ENCODE measurements at regions of chr6 and their contacts with region 1.

Region 1: GRCh38 chr6:137944793-137945498 is 77.9 kb downstream of the TNFAIP3 start:
- DNase-seq: no peak
- ATAC-seq: peak; percentile 73
- H3K4me3 Mint-ChIP-seq: peak overlapping the region; percentile 17
- H3K27ac Mint-ChIP-seq: peak overlapping the region; percentile 27
- H3K4me1 Mint-ChIP-seq: peaks cover 30% of the 10 kb centered on the region
- H3K27me3 Mint-ChIP-seq: no peaks in the 10 kb centered on the region
- CTCF ChIP-seq: no peak

Region 2: GRCh38 chr6:137661601-137662000 is 283.3 kb before region 1 on chr6:
- CTCF ChIA-PET with region 1: interaction called, 17 read pairs
- POLR2A ChIA-PET with region 1: no interaction called
- intact Hi-C with region 1: loop called (anchors 1 kb)
- DNase-seq: no peak
- ATAC-seq: peak; percentile 56
- H3K4me3 Mint-ChIP-seq: no peak overlapping the region
- H3K27ac Mint-ChIP-seq: no peak overlapping the region
- H3K4me1 Mint-ChIP-seq: no peaks in the 10 kb centered on the region
- H3K27me3 Mint-ChIP-seq: peaks cover 7% of the 10 kb centered on the region
- CTCF ChIP-seq: no peak

Region 3: DNA sequence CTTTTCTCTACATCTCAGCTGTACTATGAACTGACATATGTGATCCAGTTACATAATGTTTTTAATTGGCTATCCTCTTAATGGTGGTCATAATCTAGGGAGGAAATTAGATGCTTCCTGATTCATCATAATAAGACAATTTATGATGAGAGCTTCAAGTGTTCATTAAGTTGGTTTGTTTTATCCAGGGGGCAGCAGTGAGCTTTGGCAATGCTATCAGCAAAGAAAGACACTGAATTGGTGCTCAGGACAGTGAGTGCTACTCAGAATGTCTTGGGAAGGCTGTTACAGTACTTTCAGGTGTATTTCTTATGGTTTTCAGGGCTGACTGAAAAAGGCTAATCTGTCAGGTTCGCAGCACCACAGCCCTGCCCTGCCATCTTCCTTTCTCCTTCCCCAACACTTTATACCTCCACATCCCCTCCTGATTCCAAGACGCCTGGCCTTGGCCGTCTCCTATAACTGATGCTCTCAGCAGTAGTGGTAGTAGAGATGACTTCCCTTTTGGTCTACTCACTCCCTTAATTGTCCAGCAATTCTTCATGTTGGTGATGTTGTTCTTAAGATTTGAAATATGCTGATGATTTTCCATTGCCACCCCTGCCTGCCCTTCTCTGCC is 144.9 kb before region 1 on chr6:
- CTCF ChIA-PET with region 1: interaction called, 33 read pairs
- POLR2A ChIA-PET with region 1: interaction called, 3 read pairs
- intact Hi-C with region 1: loop called (anchors 1 kb)
- DNase-seq: no peak
- ATAC-seq: peak; percentile 91
- H3K4me3 Mint-ChIP-seq: no peak overlapping the region
- H3K27ac Mint-ChIP-seq: peak overlapping the region; percentile 65
- H3K4me1 Mint-ChIP-seq: peaks cover 29% of the 10 kb centered on the region
- H3K27me3 Mint-ChIP-seq: no peaks in the 10 kb centered on the region
- CTCF ChIP-seq: no peak

Region 4: GRCh38 chr6:137878486-137879285 is 66.3 kb before region 1 on chr6:
- CTCF ChIA-PET with region 1: interaction called, 132 read pairs
- POLR2A ChIA-PET with region 1: interaction called, 60 read pairs
- intact Hi-C with region 1: loop called (anchors 1 kb)
- DNase-seq: no peak
- ATAC-seq: no peak
- H3K4me3 Mint-ChIP-seq: no peak overlapping the region
- H3K27ac Mint-ChIP-seq: peak overlapping the region; percentile 30
- H3K4me1 Mint-ChIP-seq: peaks cover 50% of the 10 kb centered on the region
- H3K27me3 Mint-ChIP-seq: no peaks in the 10 kb centered on the region
- CTCF ChIP-seq: no peak

Region 5: DNA sequence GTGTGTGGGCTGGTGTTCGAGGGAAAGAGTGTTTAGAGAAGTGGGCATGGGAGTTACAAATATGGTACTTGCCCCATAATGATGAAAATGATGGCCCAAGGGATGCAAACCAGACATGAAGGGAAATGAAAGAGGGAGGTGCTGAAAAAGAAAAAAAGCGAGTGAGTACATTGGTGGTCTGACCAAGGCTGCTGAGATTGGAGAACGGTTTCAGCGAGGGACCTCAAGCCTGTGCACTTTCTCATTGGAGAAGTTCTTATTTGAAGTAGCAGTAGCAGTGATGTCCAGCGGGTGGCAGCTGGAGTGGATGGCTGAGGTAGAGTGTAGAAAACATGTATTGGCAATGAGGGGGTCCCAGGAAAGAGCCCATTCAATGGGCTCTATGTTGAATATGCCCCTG is 23.1 kb before region 1 on chr6:
- CTCF ChIA-PET with region 1: interaction called, 9 read pairs
- POLR2A ChIA-PET with region 1: interaction called, 25 read pairs
- intact Hi-C with region 1: loop called (anchors 1 kb)
- DNase-seq: no peak
- ATAC-seq: peak; percentile 31
- H3K4me3 Mint-ChIP-seq: no peak overlapping the region
- H3K27ac Mint-ChIP-seq: no peak overlapping the region
- H3K4me1 Mint-ChIP-seq: peaks cover 50% of the 10 kb centered on the region
- H3K27me3 Mint-ChIP-seq: no peaks in the 10 kb centered on the region
- CTCF ChIP-seq: no peak

Region 6: DNA sequence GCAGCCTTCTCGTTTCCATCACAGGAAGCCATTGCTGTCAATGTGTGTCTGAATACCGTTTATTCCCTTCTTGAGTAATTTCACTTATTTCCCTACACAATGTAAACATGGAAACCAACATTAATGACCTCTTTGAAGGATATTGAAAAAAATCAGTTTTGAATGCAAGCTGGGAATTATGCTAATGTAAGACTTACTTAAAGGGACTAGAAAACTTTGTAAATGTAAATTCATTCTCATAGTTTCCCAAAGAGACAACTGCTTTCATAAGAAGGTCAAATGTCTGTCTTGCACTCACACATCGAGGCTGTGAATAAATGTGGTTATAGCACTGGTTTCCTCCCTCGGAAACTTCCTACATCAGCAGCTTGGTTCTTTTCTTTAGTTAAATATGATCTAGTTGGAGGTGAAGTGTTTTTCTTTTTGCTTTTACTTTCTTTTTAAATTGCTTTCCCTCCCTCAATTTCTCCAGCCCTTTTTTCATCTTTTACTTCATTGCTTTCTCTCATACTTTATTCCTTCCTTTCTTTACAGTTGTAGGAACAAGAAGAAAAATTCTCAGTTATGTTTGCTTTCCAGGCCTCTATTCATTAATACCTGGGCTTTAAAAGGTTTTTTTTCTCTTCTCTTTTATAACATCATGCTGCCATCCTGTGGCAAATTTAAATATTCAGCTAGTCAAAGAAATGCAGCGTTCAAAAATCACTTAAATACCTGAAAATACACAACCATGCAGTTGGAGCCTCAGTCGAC is 30.4 kb after region 1 on chr6:
- CTCF ChIA-PET with region 1: interaction called, 11 read pairs
- POLR2A ChIA-PET with region 1: no interaction called
- intact Hi-C with region 1: loop called (anchors 2 kb)
- DNase-seq: no peak
- ATAC-seq: peak; percentile 40
- H3K4me3 Mint-ChIP-seq: peak overlapping the region; percentile 8
- H3K27ac Mint-ChIP-seq: peak overlapping the region; percentile 65
- H3K4me1 Mint-ChIP-seq: peaks cover 17% of the 10 kb centered on the region
- H3K27me3 Mint-ChIP-seq: no peaks in the 10 kb centered on the region
- CTCF ChIP-seq: no peak

Region 7: DNA sequence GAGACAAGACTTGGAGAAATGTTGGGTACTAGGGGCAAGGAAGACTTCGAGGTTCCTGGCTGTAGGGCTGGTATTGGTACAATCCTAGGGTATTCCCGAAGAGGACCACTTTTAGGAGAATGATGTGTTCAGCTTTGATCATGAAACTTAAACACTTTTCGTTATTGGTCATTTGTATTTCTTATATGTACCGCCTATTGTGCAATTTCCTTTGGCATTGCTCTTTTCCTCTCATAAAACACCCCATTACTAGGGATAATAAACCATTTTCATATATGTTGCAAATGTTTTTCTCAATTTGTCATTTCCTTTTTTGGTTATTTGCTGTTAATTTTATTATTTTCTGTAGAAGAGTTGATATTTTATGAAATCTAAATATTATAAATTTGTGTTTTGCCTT is 197.9 kb after region 1 on chr6:
- CTCF ChIA-PET with region 1: no interaction called
- POLR2A ChIA-PET with region 1: no interaction called
- intact Hi-C with region 1: no loop called
- DNase-seq: no peak
- ATAC-seq: no peak
- H3K4me3 Mint-ChIP-seq: no peak overlapping the region
- H3K27ac Mint-ChIP-seq: no peak overlapping the region
- H3K4me1 Mint-ChIP-seq: peaks cover 4% of the 10 kb centered on the region
- H3K27me3 Mint-ChIP-seq: peaks cover 19% of the 10 kb centered on the region
- CTCF ChIP-seq: no peak

Region 8: GRCh38 chr6:138545621-138545980 is 600.7 kb after region 1 on chr6:
- CTCF ChIA-PET with region 1: no interaction called
- POLR2A ChIA-PET with region 1: no interaction called
- intact Hi-C with region 1: no loop called
- DNase-seq: no peak
- ATAC-seq: no peak
- H3K4me3 Mint-ChIP-seq: no peak overlapping the region
- H3K27ac Mint-ChIP-seq: no peak overlapping the region
- H3K4me1 Mint-ChIP-seq: no peaks in the 10 kb centered on the region
- H3K27me3 Mint-ChIP-seq: peaks cover 9% of the 10 kb centered on the region
- CTCF ChIP-seq: no peak

Measured in activated B cell treated with CpG ODN at 0.5 μM for 24 hours (primary cell).